IMR-90 (cell line): ENCODE measurements at regions of chr4 and their contacts with region 1.

Region 1: DNA sequence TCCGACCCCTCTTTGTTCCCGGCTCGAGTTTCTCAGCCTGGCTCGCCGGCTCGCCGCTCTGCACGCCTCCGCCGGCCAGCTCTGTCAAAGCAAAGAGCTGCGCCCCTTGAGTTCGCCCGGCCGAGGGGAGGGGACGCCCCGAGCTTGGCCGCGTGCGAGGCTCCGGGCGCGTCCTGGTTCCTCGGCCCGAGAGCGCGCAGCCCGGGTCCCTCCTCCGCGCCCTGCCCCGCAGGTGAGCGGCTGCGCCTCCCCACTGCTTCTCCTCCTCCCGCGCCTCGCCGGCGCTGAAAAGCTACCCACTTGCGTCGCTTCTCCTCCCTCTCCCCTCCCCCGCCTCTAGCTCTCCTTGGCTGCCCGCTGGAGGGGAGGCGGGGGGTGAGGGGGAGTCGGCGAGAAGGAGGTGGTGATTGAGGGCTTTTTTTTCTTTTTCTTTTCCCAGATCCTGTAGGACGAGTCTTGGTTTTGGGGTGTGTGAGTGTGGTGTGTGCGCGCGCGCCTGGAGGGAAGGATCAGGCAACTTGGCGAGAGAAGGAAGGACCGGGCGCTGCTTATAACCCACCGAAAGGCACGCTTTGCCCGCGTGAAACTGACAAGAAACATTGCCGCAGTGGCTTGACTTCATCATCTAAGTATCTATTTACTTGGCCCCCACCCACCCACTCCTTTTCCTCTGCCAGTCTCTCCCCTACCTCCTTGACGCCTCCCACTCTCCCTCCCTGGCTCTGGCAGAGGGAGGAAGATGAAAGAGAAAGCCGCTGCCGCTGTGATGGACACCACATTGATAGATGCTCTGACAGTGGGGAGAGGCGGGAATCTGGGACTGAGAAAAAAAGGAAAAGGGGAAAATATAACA is at the start of gene LEF1:
- DNase-seq: peak; percentile 11
- ATAC-seq: peak; percentile 48
- H3K4me3 ChIP-seq: peak within 1 kb of the TSS; percentile 53
- H3K27ac ChIP-seq: no peak within 1 kb of the TSS
- H3K4me1 ChIP-seq: peaks cover 2% of the 10 kb centered on the region; the same call in 1 of the 2 replicates
- H3K27me3 ChIP-seq: peaks cover 84% of the 10 kb centered on the region
- CTCF ChIP-seq: no peak
- POLR2A ChIP-seq: no peak
- RAD21 ChIP-seq: no peak
- total RNA-seq, gene LEF1: 0.56 and 1.8 TPM in 2 replicates

Region 2: GRCh38 chr4:107863850-107864371 is 305.0 kb before region 1 on chr4:
- CTCF ChIA-PET with region 1: no interaction called
- POLR2A ChIA-PET with region 1: no interaction called
- dilution Hi-C with region 1: no loop called
- in situ Hi-C with region 1: no loop called
- intact Hi-C with region 1: no loop called
- DNase-seq: peak; percentile 51
- ATAC-seq: peak; percentile 60
- H3K4me3 ChIP-seq: no peak overlapping the region
- H3K27ac ChIP-seq: no peak overlapping the region
- H3K4me1 ChIP-seq: peaks cover 5% of the 10 kb centered on the region
- H3K27me3 ChIP-seq: no peaks in the 10 kb centered on the region
- CTCF ChIP-seq: no peak
- POLR2A ChIP-seq: no peak
- RAD21 ChIP-seq: no peak

Region 3: GRCh38 chr4:107970063-107970798 is 198.7 kb before region 1 on chr4:
- CTCF ChIA-PET with region 1: no interaction called
- POLR2A ChIA-PET with region 1: no interaction called
- dilution Hi-C with region 1: no loop called
- in situ Hi-C with region 1: no loop called
- intact Hi-C with region 1: no loop called
- DNase-seq: no peak
- ATAC-seq: no peak
- H3K4me3 ChIP-seq: no peak overlapping the region
- H3K27ac ChIP-seq: no peak overlapping the region
- H3K4me1 ChIP-seq: no peaks in the 10 kb centered on the region
- H3K27me3 ChIP-seq: no peaks in the 10 kb centered on the region
- CTCF ChIP-seq: no peak
- POLR2A ChIP-seq: no peak
- RAD21 ChIP-seq: no peak

Region 4: DNA sequence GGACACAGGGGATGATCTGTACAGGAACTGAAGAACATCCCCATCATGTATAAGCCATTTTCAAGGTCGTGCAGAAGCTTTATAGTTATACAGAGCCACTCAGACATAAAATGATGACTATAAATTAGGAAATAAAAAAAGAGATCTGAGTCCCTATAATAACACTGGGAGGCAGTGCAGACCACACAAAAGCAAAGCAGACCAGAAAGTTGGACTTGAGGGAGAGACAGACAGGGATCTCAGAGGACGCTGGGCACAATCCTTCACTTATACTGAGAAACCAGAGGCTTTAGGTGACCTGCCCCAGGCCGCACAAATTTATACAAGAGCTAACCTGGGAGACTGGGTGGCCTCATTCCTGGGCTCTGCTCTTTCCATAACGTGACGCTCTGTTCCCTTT is 108.7 kb before region 1 on chr4:
- CTCF ChIA-PET with region 1: no interaction called
- POLR2A ChIA-PET with region 1: no interaction called
- dilution Hi-C with region 1: no loop called
- in situ Hi-C with region 1: no loop called
- intact Hi-C with region 1: loop called (anchors 1 kb)
- DNase-seq: peak; percentile 46
- ATAC-seq: peak; percentile 70
- H3K4me3 ChIP-seq: no peak overlapping the region
- H3K27ac ChIP-seq: no peak overlapping the region
- H3K4me1 ChIP-seq: peaks cover 3% of the 10 kb centered on the region
- H3K27me3 ChIP-seq: no peaks in the 10 kb centered on the region; the same call in 1 of the 2 replicates
- CTCF ChIP-seq: peak; percentile 50
- POLR2A ChIP-seq: no peak
- RAD21 ChIP-seq: peak; percentile 50

Region 5: DNA sequence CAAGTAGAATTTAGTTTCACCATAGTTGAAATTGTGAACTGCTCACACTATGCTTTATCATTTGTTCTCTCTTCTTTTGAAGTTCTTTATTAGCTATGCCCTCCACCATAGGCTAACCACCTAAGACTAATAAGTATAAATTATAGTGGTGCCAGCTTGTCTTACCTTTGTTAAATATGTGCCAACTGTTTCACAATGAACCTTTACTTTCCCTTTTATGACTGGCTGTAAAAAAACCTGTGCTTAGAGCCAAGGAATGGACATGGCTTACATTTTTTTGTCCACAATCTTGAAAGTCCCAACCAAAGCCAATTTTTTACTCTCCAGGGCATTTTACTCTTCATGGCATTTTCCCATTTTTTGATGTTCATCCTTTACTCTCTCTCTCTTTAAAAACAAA is 123.3 kb after region 1 on chr4:
- CTCF ChIA-PET with region 1: no interaction called
- POLR2A ChIA-PET with region 1: no interaction called
- dilution Hi-C with region 1: no loop called
- in situ Hi-C with region 1: no loop called
- intact Hi-C with region 1: no loop called
- DNase-seq: no peak
- ATAC-seq: no peak
- H3K4me3 ChIP-seq: no peak overlapping the region
- H3K27ac ChIP-seq: no peak overlapping the region
- H3K4me1 ChIP-seq: no peaks in the 10 kb centered on the region
- H3K27me3 ChIP-seq: peaks cover 1% of the 10 kb centered on the region; the same call in 1 of the 2 replicates
- CTCF ChIP-seq: no peak
- POLR2A ChIP-seq: no peak
- RAD21 ChIP-seq: no peak